ENCODE measurements at regions of chr5 and their contacts with region 1.

Region 1: DNA sequence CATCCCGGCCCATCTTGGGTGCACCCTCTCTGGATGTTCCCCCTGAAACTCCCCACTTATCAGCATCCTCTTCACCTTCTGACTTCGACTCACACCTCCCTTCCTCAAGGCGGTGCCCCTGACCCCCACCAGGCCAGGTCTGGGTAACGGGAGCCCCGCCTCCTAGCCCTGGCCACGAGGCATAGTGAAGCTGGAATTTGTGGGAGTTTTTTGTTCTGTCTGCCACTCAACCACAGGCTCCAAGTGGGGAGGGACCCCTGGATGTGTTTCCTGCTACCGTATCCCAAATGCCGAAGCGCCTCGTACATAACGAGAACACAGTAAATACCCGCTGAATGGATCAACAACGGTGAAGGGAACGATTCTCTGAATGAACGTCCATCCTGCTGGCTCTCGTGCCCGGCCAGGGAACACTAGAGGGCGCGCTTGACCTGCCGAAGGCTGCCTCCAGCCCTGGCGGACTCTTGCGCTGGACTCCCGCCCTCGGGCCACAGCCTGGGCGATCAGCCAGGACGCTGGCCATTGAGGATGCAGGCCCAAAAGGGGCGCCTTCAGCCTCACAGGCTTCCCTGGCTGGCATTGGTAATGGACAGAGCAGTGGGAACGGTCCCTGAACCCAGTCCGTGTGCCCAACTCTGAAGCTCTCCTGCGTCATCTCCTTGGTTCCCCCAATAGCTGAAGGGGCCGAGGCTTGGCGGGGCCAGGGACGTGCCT is 47.3 kb upstream of the PHYKPL start:
- DNase-seq: peak; percentile 53
- H3K4me3 ChIP-seq: no peak overlapping the region
- H3K27ac ChIP-seq: no peak overlapping the region
- H3K4me1 ChIP-seq: no peaks in the 10 kb centered on the region
- CTCF ChIP-seq: peak; percentile 89

Region 2: DNA sequence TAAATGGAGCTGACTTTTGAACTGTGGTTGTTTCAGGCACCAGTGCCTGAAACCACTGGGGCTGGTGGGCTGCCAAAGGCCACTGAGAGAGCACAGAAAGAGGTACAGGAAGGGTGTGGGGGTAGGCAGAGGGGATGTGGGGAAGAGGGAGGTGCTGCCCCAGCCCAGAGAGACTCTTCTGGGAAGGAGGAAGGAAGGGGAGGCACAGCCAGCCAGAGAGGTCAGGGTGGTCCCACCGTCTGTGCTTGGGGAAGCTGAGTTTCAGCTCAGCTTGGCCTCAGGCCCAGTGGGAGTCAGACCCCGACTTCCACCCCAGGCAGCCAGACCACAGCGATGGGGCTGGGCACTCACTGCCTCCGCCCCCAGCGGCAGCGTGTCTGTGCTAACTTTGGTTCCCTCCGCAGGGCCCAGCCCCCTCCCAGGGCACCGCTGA is 38.6 kb before region 1 on chr5:
- CTCF ChIA-PET with region 1: no interaction called
- POLR2A ChIA-PET with region 1: no interaction called
- intact Hi-C with region 1: loop called (anchors 1 kb)
- DNase-seq: no peak
- H3K4me3 ChIP-seq: no peak overlapping the region
- H3K27ac ChIP-seq: peak overlapping the region; percentile 3
- H3K4me1 ChIP-seq: peaks cover 34% of the 10 kb centered on the region
- CTCF ChIP-seq: no peak

Region 3: DNA sequence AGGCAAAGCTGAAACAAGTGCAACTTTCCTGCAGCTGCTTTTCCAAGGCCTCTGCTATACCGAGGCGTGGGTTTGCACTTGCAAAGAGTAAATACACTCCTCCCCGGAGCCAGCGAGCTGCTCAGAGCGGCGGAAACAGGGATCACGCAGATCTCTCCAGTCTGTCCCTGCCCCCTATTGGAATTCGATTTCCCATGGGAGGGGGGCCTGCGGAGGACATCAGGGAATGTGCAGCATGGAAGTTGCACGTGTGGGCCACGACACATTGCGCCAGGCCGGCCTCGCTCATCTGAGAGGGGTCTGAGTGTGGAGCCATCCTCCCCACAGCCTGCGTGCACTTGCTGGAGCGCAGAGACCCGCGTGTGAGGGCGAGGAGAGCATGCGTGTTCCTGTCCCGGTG is 57.0 kb after region 1 on chr5:
- CTCF ChIA-PET with region 1: no interaction called
- POLR2A ChIA-PET with region 1: no interaction called
- intact Hi-C with region 1: no loop called
- DNase-seq: no peak
- H3K4me3 ChIP-seq: no peak overlapping the region
- H3K27ac ChIP-seq: no peak overlapping the region
- H3K4me1 ChIP-seq: no peaks in the 10 kb centered on the region
- CTCF ChIP-seq: no peak

Region 4: GRCh38 chr5:178551059-178551458 is 271.2 kb after region 1 on chr5:
- CTCF ChIA-PET with region 1: no interaction called
- POLR2A ChIA-PET with region 1: no interaction called
- intact Hi-C with region 1: loop called (anchors 5 kb)
- DNase-seq: peak; percentile 47
- H3K4me3 ChIP-seq: no peak overlapping the region
- H3K27ac ChIP-seq: no peak overlapping the region
- H3K4me1 ChIP-seq: no peaks in the 10 kb centered on the region
- CTCF ChIP-seq: peak; percentile 74

Measured in OCI-LY7 (cell line).